SK-N-SH (cell line): ENCODE measurements at regions of chr15 and their contacts with region 1.

Region 1: GRCh38 chr15:33700695-33701304 is 267.5 kb upstream of the CHRM5 start:
- DNase-seq: peak; percentile 66
- H3K4me3 ChIP-seq: no peak overlapping the region; a peak in 1 of 4 replicates
- H3K27ac ChIP-seq: no peak overlapping the region
- H3K4me1 ChIP-seq: peaks cover 0 to 5% of the 10 kb centered on the region in 2 experiments; a peak in 1 of 4 replicates
- H3K27me3 ChIP-seq: 0 out of 2 replicates have a peak, but pooled peaks cover 7% of the 10 kb centered on the region
- CTCF ChIP-seq: peak; percentile 96
- EP300 ChIP-seq: no peak
- RAD21 ChIP-seq: peak; percentile 94

Region 2: DNA sequence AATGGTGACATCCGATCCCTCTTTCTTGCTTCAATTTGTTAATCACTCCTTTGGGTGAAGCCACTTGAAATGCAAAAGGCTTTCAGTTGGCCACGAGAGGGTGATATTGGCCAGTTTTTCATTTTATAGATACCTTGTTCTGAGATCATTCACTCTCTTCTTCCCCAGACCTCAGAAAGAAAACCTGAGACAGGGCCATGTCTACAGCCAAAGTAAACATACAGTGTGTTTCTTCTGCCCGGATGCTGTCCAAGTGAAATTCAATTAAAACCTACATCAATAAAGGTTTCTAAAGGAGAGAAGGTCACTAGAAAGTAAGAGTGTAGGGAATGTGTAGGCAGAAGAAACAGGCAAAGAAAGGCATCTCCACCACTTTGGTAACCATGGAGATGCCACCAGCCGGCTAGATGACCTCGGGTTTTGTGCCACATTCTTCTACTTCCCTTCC is 466.8 kb before region 1 on chr15:
- CTCF ChIA-PET with region 1: interaction called, 51 read pairs
- POLR2A ChIA-PET with region 1: no interaction called
- DNase-seq: peak; percentile 43
- H3K4me3 ChIP-seq: no peak overlapping the region
- H3K27ac ChIP-seq: peak overlapping the region in 1 of 2 experiments; percentile 8; a peak in 1 of 4 replicates
- H3K4me1 ChIP-seq: no peaks in the 10 kb centered on the region; a peak in 1 of 4 replicates
- H3K27me3 ChIP-seq: no peaks in the 10 kb centered on the region
- CTCF ChIP-seq: peak; percentile 87
- EP300 ChIP-seq: no peak
- RAD21 ChIP-seq: peak; percentile 84

Region 3: GRCh38 chr15:33298631-33299030 is 402.2 kb before region 1 on chr15:
- CTCF ChIA-PET with region 1: interaction called, 182 read pairs
- POLR2A ChIA-PET with region 1: no interaction called
- DNase-seq: no peak
- H3K4me3 ChIP-seq: no peak overlapping the region
- H3K27ac ChIP-seq: no peak overlapping the region
- H3K4me1 ChIP-seq: no peaks in the 10 kb centered on the region
- H3K27me3 ChIP-seq: peaks cover 8% of the 10 kb centered on the region; the same call in 1 of the 2 replicates
- CTCF ChIP-seq: no peak
- EP300 ChIP-seq: no peak
- RAD21 ChIP-seq: no peak

Region 4: DNA sequence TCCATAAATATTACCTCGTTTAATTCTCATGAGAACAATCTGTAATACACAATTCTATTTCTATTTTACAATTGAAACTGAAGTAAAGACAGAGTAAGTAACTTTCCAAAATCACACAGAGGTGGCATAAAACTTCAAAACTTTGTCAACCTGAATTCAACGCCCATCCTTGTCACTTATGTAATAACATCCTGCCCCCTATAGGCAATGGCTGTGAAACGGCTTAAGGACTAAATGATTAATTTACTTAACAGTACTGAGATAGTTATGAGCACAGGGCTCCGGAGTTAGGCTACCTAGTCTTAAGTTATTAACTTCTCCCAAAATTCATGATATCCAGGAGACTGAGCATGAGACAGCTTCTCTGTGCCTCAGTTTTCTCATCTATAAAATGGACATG is 25.6 kb before region 1 on chr15:
- CTCF ChIA-PET with region 1: interaction called, 24 read pairs
- POLR2A ChIA-PET with region 1: no interaction called
- DNase-seq: peak; percentile 46
- H3K4me3 ChIP-seq: no peak overlapping the region; a peak in 1 of 4 replicates
- H3K27ac ChIP-seq: no peak overlapping the region
- H3K4me1 ChIP-seq: no peaks in the 10 kb centered on the region
- H3K27me3 ChIP-seq: no peaks in the 10 kb centered on the region; the same call in 1 of the 2 replicates
- CTCF ChIP-seq: peak; percentile 57
- EP300 ChIP-seq: no peak
- RAD21 ChIP-seq: peak; percentile 79

Region 5: GRCh38 chr15:33729653-33730052 is 28.9 kb after region 1 on chr15:
- CTCF ChIA-PET with region 1: interaction called, 10 read pairs
- POLR2A ChIA-PET with region 1: no interaction called
- DNase-seq: peak; percentile 14
- H3K4me3 ChIP-seq: no peak overlapping the region
- H3K27ac ChIP-seq: no peak overlapping the region
- H3K4me1 ChIP-seq: no peaks in the 10 kb centered on the region; a peak in 1 of 4 replicates
- H3K27me3 ChIP-seq: no peaks in the 10 kb centered on the region
- CTCF ChIP-seq: peak; percentile 48
- EP300 ChIP-seq: no peak
- RAD21 ChIP-seq: peak; percentile 53